ENCODE measurements at regions of chr10 and their contacts with region 1.

Region 1: GRCh38 chr10:80144067-80144695 is 11.7 kb downstream of the PLAC9 start:
- DNase-seq: peak; percentile 24
- ATAC-seq: peak; percentile 67
- H3K4me3 Mint-ChIP-seq: no peak overlapping the region; the same call in 1 of the 2 replicates
- H3K27ac Mint-ChIP-seq: no peak overlapping the region
- H3K4me1 Mint-ChIP-seq: peaks cover 6% of the 10 kb centered on the region
- H3K27me3 Mint-ChIP-seq: no peaks in the 10 kb centered on the region
- CTCF ChIP-seq: 0 out of 2 replicates have a peak, but pooled peaks have one; percentile 10

Region 2: DNA sequence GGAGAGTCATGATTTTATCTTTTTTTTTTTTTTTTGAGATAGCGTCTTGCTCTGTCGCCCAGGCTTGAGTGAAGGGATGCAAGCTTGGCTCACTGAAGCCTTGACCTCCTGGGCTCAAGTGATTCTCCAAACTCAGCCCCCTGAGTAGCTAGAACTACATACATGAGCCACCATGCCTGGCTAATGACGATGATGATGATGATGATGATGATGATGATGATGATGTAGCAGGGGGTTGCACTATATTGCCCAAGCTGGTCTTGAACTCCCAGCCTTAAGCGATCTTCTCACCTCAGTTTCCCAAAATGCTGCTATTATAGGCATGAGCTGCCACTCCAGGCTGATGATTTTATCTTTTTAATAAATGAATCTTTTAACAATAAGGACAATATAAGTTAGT is 25.5 kb before region 1 on chr10:
- CTCF ChIA-PET with region 1: interaction called, 11 read pairs
- POLR2A ChIA-PET with region 1: no interaction called
- DNase-seq: no peak
- ATAC-seq: no peak
- H3K4me3 Mint-ChIP-seq: no peak overlapping the region
- H3K27ac Mint-ChIP-seq: no peak overlapping the region
- H3K4me1 Mint-ChIP-seq: no peaks in the 10 kb centered on the region
- H3K27me3 Mint-ChIP-seq: peaks cover 9% of the 10 kb centered on the region
- CTCF ChIP-seq: no peak

Region 3: DNA sequence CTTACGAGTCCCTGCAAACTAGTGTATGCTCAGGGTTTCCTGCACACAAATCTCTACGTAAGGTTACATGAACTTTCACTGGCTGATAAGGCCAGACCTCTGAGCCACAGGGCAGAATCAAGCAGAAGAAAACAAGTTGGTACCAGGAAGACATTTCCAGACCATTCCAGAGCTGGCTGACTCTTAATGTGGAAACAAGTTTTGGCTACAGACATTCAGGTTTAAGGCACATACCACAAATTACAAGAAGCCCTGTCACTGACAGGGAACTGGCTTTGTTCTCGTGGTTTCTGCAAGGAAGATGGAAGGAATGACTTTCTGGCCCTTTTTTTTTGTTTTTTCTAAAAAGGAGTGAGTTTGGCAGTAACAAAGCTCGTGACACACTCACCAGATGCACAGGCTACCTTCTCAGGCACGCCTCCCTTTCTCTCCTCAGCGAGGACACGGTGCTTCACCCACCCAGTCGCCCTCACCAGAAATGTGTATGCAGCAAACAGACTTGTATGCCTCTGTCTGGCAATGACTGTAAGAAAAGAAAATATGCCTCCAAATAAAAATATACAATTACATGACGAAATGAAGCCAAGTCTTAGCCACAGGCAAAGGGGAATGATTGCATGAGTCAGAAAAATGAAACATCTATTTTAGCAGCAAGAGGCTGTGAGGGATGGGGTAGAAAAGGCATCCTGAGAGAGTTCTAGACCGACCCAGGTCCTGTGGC is 11.0 kb after region 1 on chr10:
- CTCF ChIA-PET with region 1: interaction called, 10 read pairs
- POLR2A ChIA-PET with region 1: no interaction called
- DNase-seq: no peak
- ATAC-seq: no peak
- H3K4me3 Mint-ChIP-seq: no peak overlapping the region
- H3K27ac Mint-ChIP-seq: peak overlapping the region; percentile 79
- H3K4me1 Mint-ChIP-seq: peaks cover 8% of the 10 kb centered on the region
- H3K27me3 Mint-ChIP-seq: no peaks in the 10 kb centered on the region
- CTCF ChIP-seq: no peak

Region 4: DNA sequence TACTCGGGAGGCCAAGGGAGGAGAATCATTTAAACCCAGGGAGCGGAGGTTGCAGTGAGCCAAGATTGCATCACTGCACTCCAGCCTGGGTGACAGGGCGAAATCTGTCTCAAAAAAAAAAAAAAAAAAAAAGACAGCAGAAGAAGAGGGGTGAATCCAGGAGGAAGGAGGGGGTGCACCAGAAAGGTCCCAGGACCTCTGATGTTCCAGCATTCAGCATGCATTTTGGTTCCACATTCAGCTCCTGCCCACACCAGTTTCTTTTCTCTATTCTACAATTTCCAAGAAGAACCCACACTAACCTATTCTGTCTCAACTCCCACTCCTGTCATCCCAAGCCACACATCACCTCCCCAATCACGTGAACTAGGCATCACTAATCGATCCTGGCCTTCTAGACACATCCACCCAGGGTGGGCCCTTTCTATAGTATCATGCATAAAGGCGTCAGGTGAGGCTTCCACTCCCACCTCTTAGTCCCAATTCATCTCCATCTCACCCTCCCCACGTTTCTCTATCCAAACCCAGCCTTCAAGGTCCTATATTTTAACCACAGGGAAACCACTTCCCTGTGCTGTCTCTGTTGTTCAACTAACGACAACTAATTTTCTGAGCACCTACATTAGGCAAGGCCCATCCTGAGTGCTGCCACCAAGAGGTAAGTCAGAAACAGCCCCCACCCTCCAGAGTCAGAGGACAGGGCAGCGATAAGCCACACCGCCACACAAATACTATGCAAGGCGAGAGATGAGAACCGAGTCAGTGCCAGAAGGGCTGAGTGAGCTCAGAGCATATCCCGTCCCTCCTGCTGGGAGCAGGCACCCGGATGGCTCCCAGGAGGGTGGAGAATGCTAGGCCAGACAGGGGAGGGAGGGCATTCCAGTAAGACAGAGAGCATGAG is 59.0 kb after region 1 on chr10:
- CTCF ChIA-PET with region 1: interaction called, 14 read pairs
- POLR2A ChIA-PET with region 1: no interaction called
- DNase-seq: peak; percentile 43
- ATAC-seq: peak; percentile 33
- H3K4me3 Mint-ChIP-seq: peak overlapping the region; percentile 86
- H3K27ac Mint-ChIP-seq: peak overlapping the region; percentile 94
- H3K4me1 Mint-ChIP-seq: peaks cover 71% of the 10 kb centered on the region
- H3K27me3 Mint-ChIP-seq: peaks cover 5% of the 10 kb centered on the region
- CTCF ChIP-seq: no peak